IMR-90 (cell line): ENCODE measurements at regions of chr1 and their contacts with region 1.

Region 1: GRCh38 chr1:63773815-63774616 is at the start of gene ROR1:
- DNase-seq: peak; percentile 76
- ATAC-seq: peak; percentile 94
- H3K4me3 ChIP-seq: peak within 1 kb of the TSS; percentile 69
- H3K27ac ChIP-seq: peak within 1 kb of the TSS; percentile 79
- H3K4me1 ChIP-seq: peaks cover 6% of the 10 kb centered on the region
- H3K27me3 ChIP-seq: peaks cover 8% of the 10 kb centered on the region; the same call in 1 of the 2 replicates
- CTCF ChIP-seq: peak; percentile 70
- POLR2A ChIP-seq: no peak
- RAD21 ChIP-seq: peak; percentile 75
- total RNA-seq, gene ROR1: 8.1 and 10.0 TPM in 2 replicates

Region 2: GRCh38 chr1:63674238-63674864 is 99.7 kb before region 1 on chr1:
- CTCF ChIA-PET with region 1: interaction called, 4 read pairs
- POLR2A ChIA-PET with region 1: no interaction called
- dilution Hi-C with region 1: no loop called
- in situ Hi-C with region 1: no loop called
- intact Hi-C with region 1: loop called (anchors 1 kb)
- DNase-seq: peak; percentile 93
- ATAC-seq: peak; percentile 99
- H3K4me3 ChIP-seq: no peak overlapping the region
- H3K27ac ChIP-seq: no peak overlapping the region
- H3K4me1 ChIP-seq: no peaks in the 10 kb centered on the region
- H3K27me3 ChIP-seq: no peaks in the 10 kb centered on the region
- CTCF ChIP-seq: peak; percentile 84
- POLR2A ChIP-seq: no peak
- RAD21 ChIP-seq: peak; percentile 83

Region 3: DNA sequence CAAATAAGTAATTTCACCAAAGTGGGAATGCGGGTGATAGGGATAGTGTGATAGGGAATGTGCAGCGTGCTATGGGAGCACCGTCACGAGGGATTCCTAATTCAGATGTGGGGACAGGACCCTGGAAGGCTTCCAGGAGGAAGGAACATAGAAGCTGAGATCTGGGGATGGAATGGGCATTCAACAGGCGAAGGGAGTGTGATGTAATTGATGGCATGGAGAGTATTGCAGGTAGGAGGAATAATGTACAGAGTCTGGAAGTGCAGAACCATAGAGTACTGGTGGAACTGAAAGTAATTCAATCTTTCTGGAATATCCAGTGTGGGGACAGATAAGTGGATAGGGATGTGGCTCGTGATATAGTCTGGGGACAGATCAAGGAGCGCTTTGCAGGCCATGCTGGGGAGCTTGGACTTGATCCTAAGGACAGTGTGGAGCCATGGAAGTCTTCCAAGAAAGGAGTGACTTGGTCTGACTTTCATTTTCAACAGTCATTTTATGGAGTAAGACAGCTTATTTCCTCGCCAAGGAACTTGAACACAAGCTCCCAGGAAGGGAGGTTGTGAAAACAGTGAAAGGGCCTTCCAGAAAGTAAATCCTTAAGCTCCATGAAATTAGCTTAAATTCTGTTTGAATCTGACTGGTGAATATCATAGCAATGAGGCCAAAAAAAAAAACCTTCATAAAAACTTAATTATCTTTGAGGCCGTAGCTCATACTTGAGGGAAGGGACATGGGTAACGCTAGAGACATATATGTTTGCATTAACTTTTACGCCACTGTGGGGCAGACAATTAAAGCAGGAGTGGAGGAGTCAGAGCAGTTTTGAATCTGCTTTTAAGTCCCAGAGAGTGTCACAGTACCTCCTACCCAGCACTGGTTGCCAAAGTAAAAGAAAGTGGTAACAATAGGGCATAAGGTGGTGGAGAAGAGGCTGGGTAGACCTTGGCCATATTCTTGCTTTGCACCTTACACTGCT is 55.6 kb after region 1 on chr1:
- CTCF ChIA-PET with region 1: no interaction called
- POLR2A ChIA-PET with region 1: no interaction called
- dilution Hi-C with region 1: no loop called
- in situ Hi-C with region 1: no loop called
- intact Hi-C with region 1: loop called (anchors 5 kb)
- DNase-seq: no peak
- ATAC-seq: no peak
- H3K4me3 ChIP-seq: no peak overlapping the region
- H3K27ac ChIP-seq: no peak overlapping the region
- H3K4me1 ChIP-seq: peaks cover 6% of the 10 kb centered on the region; the same call in 1 of the 2 replicates
- H3K27me3 ChIP-seq: no peaks in the 10 kb centered on the region
- CTCF ChIP-seq: no peak
- POLR2A ChIP-seq: no peak
- RAD21 ChIP-seq: no peak

Region 4: GRCh38 chr1:64038965-64039926 is 265.2 kb after region 1 on chr1:
- CTCF ChIA-PET with region 1: no interaction called
- POLR2A ChIA-PET with region 1: no interaction called
- dilution Hi-C with region 1: no loop called
- in situ Hi-C with region 1: no loop called
- intact Hi-C with region 1: loop called (anchors 2 kb)
- DNase-seq: peak; percentile 100
- ATAC-seq: peak; percentile 84
- H3K4me3 ChIP-seq: no peak overlapping the region
- H3K27ac ChIP-seq: peak overlapping the region; percentile 51; the same call in 1 of the 2 replicates
- H3K4me1 ChIP-seq: peaks cover 22% of the 10 kb centered on the region
- H3K27me3 ChIP-seq: no peaks in the 10 kb centered on the region
- CTCF ChIP-seq: no peak
- POLR2A ChIP-seq: no peak
- RAD21 ChIP-seq: no peak; the same call in 1 of the 2 replicates

Region 5: GRCh38 chr1:64147759-64148158 is 373.7 kb after region 1 on chr1:
- CTCF ChIA-PET with region 1: no interaction called
- POLR2A ChIA-PET with region 1: no interaction called
- dilution Hi-C with region 1: no loop called
- in situ Hi-C with region 1: loop called (anchors 10 kb)
- intact Hi-C with region 1: no loop called
- DNase-seq: no peak
- ATAC-seq: peak; percentile 27; the same call in 1 of the 2 replicates
- H3K4me3 ChIP-seq: no peak overlapping the region
- H3K27ac ChIP-seq: no peak overlapping the region
- H3K4me1 ChIP-seq: no peaks in the 10 kb centered on the region
- H3K27me3 ChIP-seq: no peaks in the 10 kb centered on the region
- CTCF ChIP-seq: no peak
- POLR2A ChIP-seq: no peak
- RAD21 ChIP-seq: no peak

Region 6: GRCh38 chr1:64242895-64243756 is 469.1 kb after region 1 on chr1:
- CTCF ChIA-PET with region 1: interaction called, 3 read pairs
- POLR2A ChIA-PET with region 1: no interaction called
- dilution Hi-C with region 1: no loop called
- in situ Hi-C with region 1: loop called (anchors 10 kb)
- intact Hi-C with region 1: loop called (anchors 1 kb)
- DNase-seq: peak; percentile 58
- ATAC-seq: peak; percentile 55; the same call in 1 of the 2 replicates
- H3K4me3 ChIP-seq: no peak overlapping the region
- H3K27ac ChIP-seq: no peak overlapping the region
- H3K4me1 ChIP-seq: no peaks in the 10 kb centered on the region
- H3K27me3 ChIP-seq: peaks cover 2% of the 10 kb centered on the region
- CTCF ChIP-seq: peak; percentile 64
- POLR2A ChIP-seq: no peak
- RAD21 ChIP-seq: peak; percentile 82